ENCODE measurements at regions of chr17 and their contacts with region 1.

Region 1: GRCh38 chr17:35432176-35433074 is at the start of gene SLFN12:
- DNase-seq: peak; percentile 66
- H3K4me3 Mint-ChIP-seq: peak within 1 kb of the TSS; percentile 87
- H3K27ac Mint-ChIP-seq: peak within 1 kb of the TSS; percentile 88
- H3K4me1 Mint-ChIP-seq: peaks cover 41% of the 10 kb centered on the region
- H3K27me3 Mint-ChIP-seq: no peaks in the 10 kb centered on the region
- total RNA-seq, gene SLFN12: 5.3 to 5.6 TPM

Region 2: GRCh38 chr17:35227546-35227945 is 204.9 kb before region 1 on chr17:
- CTCF ChIA-PET with region 1: no interaction called
- intact Hi-C with region 1: no loop called
- DNase-seq: no peak
- H3K4me3 Mint-ChIP-seq: no peak overlapping the region
- H3K27ac Mint-ChIP-seq: no peak overlapping the region
- H3K4me1 Mint-ChIP-seq: peaks cover 59% of the 10 kb centered on the region
- H3K27me3 Mint-ChIP-seq: no peaks in the 10 kb centered on the region

Region 3: GRCh38 chr17:35448214-35448898 is 15.9 kb after region 1 on chr17 and contains the start of gene SLFN13:
- CTCF ChIA-PET with region 1: no interaction called
- intact Hi-C with region 1: loop called (anchors 1 kb)
- DNase-seq: peak; percentile 98
- H3K4me3 Mint-ChIP-seq: peak within 1 kb of the TSS; percentile 52
- H3K27ac Mint-ChIP-seq: peak within 1 kb of the TSS; percentile 13
- H3K4me1 Mint-ChIP-seq: peaks cover 12% of the 10 kb centered on the region
- H3K27me3 Mint-ChIP-seq: no peaks in the 10 kb centered on the region
- total RNA-seq, gene SLFN13: 28.6 to 30.1 TPM

Measured in activated naive CD4-positive, alpha-beta T cell treated with anti-CD3 and anti-CD28 coated beads for 36 hours (primary cell).